K562 (cell line): ENCODE measurements at regions of chr13 and their contacts with region 1.

Region 1: GRCh38 chr13:37001915-37002250 is 1.3 kb downstream of the EXOSC8 start:
- DNase-seq: no peak
- ATAC-seq: no peak
- H3K4me3 ChIP-seq: peak overlapping the region; percentile 96
- H3K27ac ChIP-seq: peak overlapping the region; percentile 100; the same call in 2 of the 3 replicates
- H3K4me1 ChIP-seq: no peaks in the 10 kb centered on the region; a peak in 1 of 5 replicates
- H3K27me3 ChIP-seq: no peaks in the 10 kb centered on the region
- CTCF ChIP-seq: no peak
- EP300 ChIP-seq: no peak
- POLR2A ChIP-seq: no peak
- RAD21 ChIP-seq: no peak

Region 2: DNA sequence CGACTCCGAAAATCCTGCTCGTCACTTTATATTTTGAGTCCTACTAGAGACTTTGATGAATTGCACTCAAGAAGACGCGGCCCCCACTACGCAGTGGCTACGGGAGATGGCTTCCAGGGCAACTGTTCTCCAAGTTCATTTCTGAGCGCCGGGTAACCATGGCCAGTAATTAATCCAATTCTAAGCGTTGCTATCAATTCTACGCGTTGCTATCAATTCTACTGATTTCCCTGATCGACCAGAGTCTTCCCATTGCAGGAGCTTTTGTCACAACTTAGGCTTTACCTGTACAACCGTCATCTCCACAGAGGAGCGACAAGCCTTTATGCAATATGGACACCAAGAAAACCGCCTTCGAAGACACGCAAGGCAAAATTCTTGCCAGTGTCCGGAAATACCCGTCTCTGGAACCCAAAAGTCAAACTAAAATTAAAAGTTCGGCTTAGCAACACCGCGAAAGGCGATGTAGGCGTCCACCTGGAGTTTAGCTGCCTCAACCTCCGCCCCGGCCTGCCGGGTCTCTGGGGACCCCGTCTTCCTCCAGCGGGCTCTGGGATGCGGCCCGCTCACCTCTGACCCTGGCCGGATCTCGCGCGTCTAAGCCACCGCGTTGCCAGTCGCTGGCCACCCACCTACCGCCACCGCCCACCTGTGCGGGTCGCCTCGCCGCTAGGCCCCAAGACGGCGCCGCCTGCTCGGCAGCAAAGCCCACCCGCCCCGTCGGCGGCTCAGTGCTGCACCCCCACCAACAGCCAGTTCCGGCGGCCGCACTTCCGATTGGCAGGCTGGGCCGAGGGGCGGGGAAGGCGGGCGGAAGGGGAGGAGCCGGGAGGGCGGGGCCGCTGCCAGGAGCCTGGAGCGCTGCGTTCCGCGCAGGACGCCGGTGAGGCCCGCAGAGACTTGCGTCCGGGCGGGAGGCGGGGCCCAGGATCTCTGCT is 57.3 kb after region 1 on chr13 and contains the start of gene SUPT20H:
- CTCF ChIA-PET with region 1: no interaction called
- POLR2A ChIA-PET with region 1: interaction called, 3 read pairs
- in situ Hi-C with region 1: no loop called
- intact Hi-C with region 1: loop called (anchors 5 kb)
- DNase-seq: peak; percentile 82 to 91 (median 84)
- ATAC-seq: peak; percentile 98
- H3K4me3 ChIP-seq: peak within 1 kb of the TSS; percentile 89
- H3K27ac ChIP-seq: peak within 1 kb of the TSS; percentile 89
- H3K4me1 ChIP-seq: no peaks in the 10 kb centered on the region; a peak in 1 of 5 replicates
- H3K27me3 ChIP-seq: no peaks in the 10 kb centered on the region
- CTCF ChIP-seq: no peak
- EP300 ChIP-seq: no peak
- POLR2A ChIP-seq: peak; percentile 81
- RAD21 ChIP-seq: no peak
- polyA plus RNA-seq, gene SUPT20H: 11.4 to 14.8 TPM

Region 3: DNA sequence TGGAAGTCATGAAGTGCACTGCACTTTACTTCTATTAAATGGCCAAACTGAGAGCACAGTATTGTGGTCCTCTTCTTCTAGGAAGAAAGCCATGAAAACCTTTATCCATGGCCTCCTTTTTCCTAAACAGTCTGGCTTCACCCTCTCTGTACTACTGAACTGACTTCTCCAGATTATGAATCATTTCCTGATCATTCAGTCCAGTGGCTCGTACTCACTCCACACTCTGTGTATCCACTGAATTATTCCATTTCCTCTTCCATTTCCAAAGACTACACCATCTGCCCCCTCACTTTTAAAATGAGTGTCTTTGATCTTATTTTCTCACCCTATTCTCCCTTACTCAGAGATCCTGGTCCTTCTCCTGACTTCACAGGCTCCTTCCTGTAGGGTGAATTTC is 1655.3 kb after region 1 on chr13:
- CTCF ChIA-PET with region 1: no interaction called
- POLR2A ChIA-PET with region 1: no interaction called
- in situ Hi-C with region 1: no loop called
- intact Hi-C with region 1: no loop called
- DNase-seq: no peak
- ATAC-seq: no peak
- H3K4me3 ChIP-seq: no peak overlapping the region
- H3K27ac ChIP-seq: no peak overlapping the region
- H3K4me1 ChIP-seq: no peaks in the 10 kb centered on the region
- H3K27me3 ChIP-seq: no peaks in the 10 kb centered on the region
- CTCF ChIP-seq: no peak
- EP300 ChIP-seq: no peak
- POLR2A ChIP-seq: no peak
- RAD21 ChIP-seq: no peak